ENCODE measurements at regions of chr5 and their contacts with region 1.

Region 1: DNA sequence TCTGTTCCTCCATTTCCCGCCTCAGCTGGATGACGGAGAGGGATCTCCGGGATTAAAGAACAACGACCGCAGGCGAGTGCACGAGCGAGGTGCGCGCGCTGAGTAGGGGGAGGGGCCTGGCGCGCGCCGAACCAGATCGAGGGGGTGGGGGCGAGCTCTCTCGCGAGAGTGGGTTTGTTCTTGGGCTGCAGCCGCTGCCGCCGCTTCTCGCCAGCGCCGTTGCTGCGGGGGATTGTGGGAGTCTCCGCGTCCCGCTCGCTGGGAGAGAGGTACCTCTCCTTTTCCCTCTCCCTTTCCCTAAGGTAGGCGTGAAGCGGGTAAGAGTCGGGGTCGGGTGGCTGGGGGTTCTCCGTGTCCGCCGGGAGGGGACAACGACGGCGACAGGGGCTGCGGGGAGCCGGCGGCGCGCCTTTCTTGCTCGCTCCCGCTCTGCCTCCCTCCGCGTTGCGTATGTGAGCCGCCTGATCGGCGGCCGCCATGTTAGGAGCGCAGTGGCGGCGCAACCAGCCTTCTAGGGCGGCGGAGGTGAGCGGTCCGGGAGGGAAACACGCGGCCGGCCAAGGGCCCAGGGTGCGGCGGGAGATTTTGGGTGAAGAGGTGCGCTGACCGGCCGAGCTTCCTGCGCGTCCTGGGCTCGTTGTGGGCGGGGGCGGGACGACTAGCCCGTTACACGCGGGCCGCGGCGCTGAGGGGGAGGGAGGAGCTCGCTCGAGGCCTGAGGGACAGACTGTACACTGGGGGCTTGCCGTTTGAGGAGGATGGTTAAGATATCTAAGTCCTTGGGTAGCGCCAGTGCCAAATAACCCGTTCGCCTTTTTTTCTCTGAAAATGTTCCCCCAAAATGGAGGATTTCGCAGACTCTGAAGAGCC is at the start of gene MATR3:
- DNase-seq: peak; percentile 86 to 97 (median 92)
- ATAC-seq: peak; percentile 81 to 87
- H3K4me3 Mint-ChIP-seq: peak within 1 kb of the TSS; percentile 95 to 99 (median 98)
- H3K27ac Mint-ChIP-seq: peak within 1 kb of the TSS; percentile 96 to 100 (median 99)
- H3K4me1 Mint-ChIP-seq: peaks cover 23 to 49% (median 38%) of the 10 kb centered on the region in 4 donors
- H3K27me3 Mint-ChIP-seq: no peaks in the 10 kb centered on the region
- polyA plus RNA-seq, gene MATR3: 323 to 351 (median 327) TPM

Region 2: GRCh38 chr5:138575194-138576015 is 718.3 kb before region 1 on chr5 and contains the start of gene HSPA9:
- POLR2A ChIA-PET with region 1: interaction called, 12 read pairs
- DNase-seq: peak; percentile 87 to 99 (median 97)
- ATAC-seq: peak; percentile 85 to 86
- H3K4me3 Mint-ChIP-seq: peak within 1 kb of the TSS; percentile 93 to 99 (median 98)
- H3K27ac Mint-ChIP-seq: peak within 1 kb of the TSS; percentile 99 to 100 (median 100)
- H3K4me1 Mint-ChIP-seq: peaks cover 16 to 45% (median 33%) of the 10 kb centered on the region in 4 donors
- H3K27me3 Mint-ChIP-seq: no peaks in the 10 kb centered on the region
- polyA plus RNA-seq, gene HSPA9: 130 to 164 (median 140) TPM

Region 3: GRCh38 chr5:139251695-139252288 is 41.9 kb before region 1 on chr5:
- POLR2A ChIA-PET with region 1: no interaction called
- DNase-seq: no peak
- ATAC-seq: no peak
- H3K4me3 Mint-ChIP-seq: no peak overlapping the region
- H3K27ac Mint-ChIP-seq: peak overlapping the region in 1 of 10 donors; percentile 23
- H3K4me1 Mint-ChIP-seq: peaks cover 0 to 11% (median 6%) of the 10 kb centered on the region in 4 donors
- H3K27me3 Mint-ChIP-seq: no peaks in the 10 kb centered on the region

Region 4: DNA sequence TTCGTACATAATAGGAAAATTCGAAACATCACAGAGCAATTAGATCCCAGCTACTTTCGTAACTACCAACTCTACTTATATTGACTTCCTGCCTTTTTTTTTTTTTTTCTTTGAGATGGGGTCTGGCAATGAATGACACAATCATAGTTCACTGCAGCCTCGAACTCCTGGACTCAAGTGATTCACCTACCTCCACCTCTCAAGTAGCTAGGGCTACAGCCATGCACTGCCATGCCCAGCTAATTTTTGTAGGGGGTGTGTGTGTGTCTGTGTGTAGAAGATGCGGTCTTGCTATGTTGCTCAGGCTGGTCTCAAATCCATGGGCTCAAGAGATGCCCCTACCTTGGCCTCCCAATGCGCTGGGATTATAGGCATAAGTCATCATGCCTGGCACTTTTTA is 42.1 kb after region 1 on chr5:
- POLR2A ChIA-PET with region 1: interaction called, 126 read pairs
- DNase-seq: peak in 1 of 10 donors; percentile 18
- ATAC-seq: peak; percentile 26 to 36
- H3K4me3 Mint-ChIP-seq: peak overlapping the region in 2 of 10 donors; percentile 26 to 33
- H3K27ac Mint-ChIP-seq: peak overlapping the region in 9 of 10 donors; percentile 35 to 88 (median 65)
- H3K4me1 Mint-ChIP-seq: peaks cover 5 to 18% (median 13%) of the 10 kb centered on the region in 4 donors
- H3K27me3 Mint-ChIP-seq: no peaks in the 10 kb centered on the region

Region 5: DNA sequence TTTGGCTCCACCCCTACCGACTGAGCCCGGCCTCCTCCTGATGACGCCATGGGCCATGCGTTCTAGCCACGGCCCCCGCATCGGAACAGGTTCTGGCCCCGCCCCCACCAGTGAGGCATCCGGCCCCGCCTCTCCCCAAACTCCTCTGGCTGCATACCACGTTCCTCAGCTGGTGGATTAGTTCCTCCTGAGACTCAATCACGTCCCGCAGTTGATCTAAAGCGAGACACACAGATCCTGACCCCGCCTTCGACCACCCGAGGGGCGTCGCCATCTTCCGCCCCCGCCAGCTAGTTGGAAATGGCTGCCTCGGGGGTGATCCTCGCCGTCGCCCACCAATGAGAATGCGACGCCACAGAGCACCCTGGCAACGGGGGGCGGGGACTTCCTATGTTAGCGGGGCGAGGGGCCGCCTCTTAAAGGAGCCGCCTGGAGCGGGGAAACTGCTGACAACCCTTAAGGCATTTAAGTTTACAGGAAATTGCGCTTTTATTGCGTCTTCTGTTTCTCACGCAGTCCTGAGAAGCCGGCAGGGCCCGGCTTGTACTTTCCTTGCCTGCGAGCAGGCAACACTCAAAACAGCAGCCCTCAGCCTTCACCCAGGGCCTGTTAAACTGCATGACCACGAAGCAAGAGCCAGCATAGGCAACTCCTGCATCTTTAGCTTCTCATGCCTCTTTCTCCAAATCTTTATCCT is 110.2 kb after region 1 on chr5 and contains the start of gene SPATA24:
- POLR2A ChIA-PET with region 1: interaction called, 11 read pairs
- DNase-seq: peak; percentile 94 to 99 (median 98)
- ATAC-seq: peak; percentile 89 to 91
- H3K4me3 Mint-ChIP-seq: peak within 1 kb of the TSS; percentile 87 to 99 (median 96)
- H3K27ac Mint-ChIP-seq: peak within 1 kb of the TSS; percentile 95 to 100 (median 99)
- H3K4me1 Mint-ChIP-seq: peaks cover 24 to 45% (median 30%) of the 10 kb centered on the region in 4 donors
- H3K27me3 Mint-ChIP-seq: no peaks in the 10 kb centered on the region
- polyA plus RNA-seq, gene SPATA24: 2.9 to 8.7 (median 4.3) TPM